ENCODE measurements at regions of chr11 and their contacts with region 1.

Region 1: GRCh38 chr11:18115360-18116127 is 9.7 kb upstream of the SAAL1 start:
- DNase-seq: peak; percentile 78
- H3K4me3 Mint-ChIP-seq: no peak overlapping the region
- H3K27ac Mint-ChIP-seq: no peak overlapping the region
- H3K4me1 Mint-ChIP-seq: no peaks in the 10 kb centered on the region
- H3K27me3 Mint-ChIP-seq: peaks cover 36% of the 10 kb centered on the region
- CTCF ChIP-seq: peak; percentile 86

Region 2: GRCh38 chr11:18132341-18132740 is 16.8 kb after region 1 on chr11 and contains the start of gene MRGPRX3:
- CTCF ChIA-PET with region 1: interaction called, 15 read pairs
- POLR2A ChIA-PET with region 1: interaction called, 3 read pairs
- intact Hi-C with region 1: no loop called
- DNase-seq: peak; percentile 33
- H3K4me3 Mint-ChIP-seq: no peak within 1 kb of the TSS
- H3K27ac Mint-ChIP-seq: no peak within 1 kb of the TSS
- H3K4me1 Mint-ChIP-seq: no peaks in the 10 kb centered on the region
- H3K27me3 Mint-ChIP-seq: no peaks in the 10 kb centered on the region
- CTCF ChIP-seq: no peak
- total RNA-seq, gene MRGPRX3: 0.34 and 0.79 TPM in 2 replicates

Region 3: GRCh38 chr11:18145025-18145424 is 29.5 kb after region 1 on chr11:
- CTCF ChIA-PET with region 1: no interaction called
- POLR2A ChIA-PET with region 1: no interaction called
- intact Hi-C with region 1: no loop called
- DNase-seq: no peak
- H3K4me3 Mint-ChIP-seq: no peak overlapping the region
- H3K27ac Mint-ChIP-seq: no peak overlapping the region
- H3K4me1 Mint-ChIP-seq: peaks cover 11% of the 10 kb centered on the region
- H3K27me3 Mint-ChIP-seq: no peaks in the 10 kb centered on the region
- CTCF ChIP-seq: no peak

Region 4: GRCh38 chr11:18243783-18244362 is 128.3 kb after region 1 on chr11:
- CTCF ChIA-PET with region 1: interaction called, 12 read pairs
- POLR2A ChIA-PET with region 1: no interaction called
- intact Hi-C with region 1: no loop called
- DNase-seq: peak; percentile 86
- H3K4me3 Mint-ChIP-seq: no peak overlapping the region
- H3K27ac Mint-ChIP-seq: no peak overlapping the region
- H3K4me1 Mint-ChIP-seq: peaks cover 24% of the 10 kb centered on the region
- H3K27me3 Mint-ChIP-seq: peaks cover 10% of the 10 kb centered on the region
- CTCF ChIP-seq: peak; percentile 94

Region 5: DNA sequence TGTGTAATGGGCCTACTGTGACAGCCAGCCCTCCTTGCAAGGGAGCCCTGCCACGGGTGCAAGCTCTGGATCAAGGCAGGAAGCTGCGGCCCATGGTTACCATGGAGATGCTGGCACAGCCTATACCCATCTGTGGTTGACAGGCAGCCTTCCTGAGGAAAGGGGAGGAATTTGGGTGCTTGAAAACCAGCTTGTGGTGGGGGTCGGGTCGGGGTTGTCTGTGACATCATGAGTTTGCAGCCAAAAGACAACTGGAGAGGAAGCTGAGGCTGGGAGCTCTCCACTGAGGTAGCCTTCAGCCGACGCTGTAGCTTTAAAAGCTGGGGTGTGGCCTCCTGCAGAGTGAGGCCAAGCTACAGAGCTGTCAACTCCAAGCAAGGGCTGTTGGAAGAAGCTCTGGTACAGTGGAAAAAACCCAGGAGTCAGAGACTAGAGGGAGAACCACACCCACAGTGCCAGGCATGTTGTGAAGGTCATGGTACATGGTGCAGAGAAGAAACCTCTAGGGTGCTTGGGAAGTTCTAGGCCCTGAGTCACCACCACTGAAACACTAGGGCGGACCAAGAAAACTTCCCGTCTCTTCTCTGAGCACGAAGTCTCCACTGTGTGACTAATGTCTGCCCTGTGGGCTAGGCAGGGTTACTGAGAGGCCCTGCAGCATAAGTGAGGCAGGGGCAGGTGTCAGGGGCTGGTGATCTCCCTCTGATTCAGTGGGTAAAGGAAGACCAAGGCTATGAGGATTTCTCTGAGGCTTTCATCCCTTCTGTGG is 268.0 kb after region 1 on chr11:
- CTCF ChIA-PET with region 1: no interaction called
- POLR2A ChIA-PET with region 1: interaction called, 3 read pairs
- intact Hi-C with region 1: loop called (anchors 5 kb)
- DNase-seq: peak; percentile 100
- H3K4me3 Mint-ChIP-seq: peak overlapping the region; percentile 40
- H3K27ac Mint-ChIP-seq: peak overlapping the region; percentile 96
- H3K4me1 Mint-ChIP-seq: peaks cover 21% of the 10 kb centered on the region
- H3K27me3 Mint-ChIP-seq: no peaks in the 10 kb centered on the region
- CTCF ChIP-seq: no peak

Region 6: GRCh38 chr11:18567081-18567480 is 451.5 kb after region 1 on chr11:
- CTCF ChIA-PET with region 1: no interaction called
- POLR2A ChIA-PET with region 1: no interaction called
- intact Hi-C with region 1: no loop called
- DNase-seq: no peak
- H3K4me3 Mint-ChIP-seq: no peak overlapping the region
- H3K27ac Mint-ChIP-seq: peak overlapping the region; percentile 19
- H3K4me1 Mint-ChIP-seq: peaks cover 6% of the 10 kb centered on the region
- H3K27me3 Mint-ChIP-seq: no peaks in the 10 kb centered on the region
- CTCF ChIP-seq: no peak

Region 7: GRCh38 chr11:18731949-18732821 is 616.6 kb after region 1 on chr11:
- CTCF ChIA-PET with region 1: interaction called, 8 read pairs
- POLR2A ChIA-PET with region 1: no interaction called
- intact Hi-C with region 1: loop called (anchors 1 kb)
- DNase-seq: peak; percentile 46
- H3K4me3 Mint-ChIP-seq: no peak overlapping the region
- H3K27ac Mint-ChIP-seq: no peak overlapping the region
- H3K4me1 Mint-ChIP-seq: no peaks in the 10 kb centered on the region
- H3K27me3 Mint-ChIP-seq: no peaks in the 10 kb centered on the region
- CTCF ChIP-seq: peak; percentile 94

Region 8: DNA sequence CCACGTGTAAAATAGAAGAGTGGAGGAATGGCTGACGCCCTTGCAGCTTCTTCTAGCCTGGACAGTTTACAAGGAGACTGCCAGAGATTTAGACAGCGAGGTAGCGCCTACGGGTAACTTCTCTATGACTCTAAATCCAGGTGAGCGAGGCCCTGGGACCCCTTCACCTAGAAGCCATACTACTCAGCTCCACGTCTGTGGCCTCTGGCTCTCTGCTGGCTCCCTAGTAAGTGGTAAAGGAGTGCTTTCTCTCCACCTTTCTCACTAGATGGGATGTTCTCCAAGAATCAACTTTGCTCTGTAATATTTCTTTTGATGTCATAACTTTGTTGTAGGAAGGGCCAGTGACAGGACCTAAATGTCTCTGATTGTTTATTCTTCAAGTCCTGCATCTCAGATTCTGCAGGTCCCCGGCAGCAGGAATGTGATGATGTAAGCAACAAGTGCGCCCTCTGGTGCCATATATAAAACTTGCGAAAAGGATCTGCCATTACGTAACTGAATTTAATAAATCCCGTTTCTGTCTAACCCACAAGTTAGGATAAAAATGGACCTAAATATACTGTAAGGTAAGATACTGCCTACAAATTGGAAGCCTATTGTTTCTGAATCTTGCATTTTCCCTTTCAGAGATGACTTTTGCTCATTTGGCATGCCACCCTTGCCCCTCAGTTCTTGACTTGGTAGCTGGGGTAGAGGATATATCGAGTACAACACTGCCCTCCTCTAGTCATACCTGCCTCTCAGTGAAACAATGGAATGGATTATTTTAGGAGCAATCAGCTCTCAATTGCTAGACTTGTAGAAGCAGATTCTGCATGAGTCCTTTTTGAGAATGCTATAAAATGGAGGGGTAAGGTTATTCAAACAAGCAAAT is 687.1 kb after region 1 on chr11:
- CTCF ChIA-PET with region 1: interaction called, 11 read pairs
- POLR2A ChIA-PET with region 1: no interaction called
- intact Hi-C with region 1: loop called (anchors 1 kb)
- DNase-seq: peak; percentile 66
- H3K4me3 Mint-ChIP-seq: no peak overlapping the region
- H3K27ac Mint-ChIP-seq: no peak overlapping the region
- H3K4me1 Mint-ChIP-seq: no peaks in the 10 kb centered on the region
- H3K27me3 Mint-ChIP-seq: peaks cover 84% of the 10 kb centered on the region
- CTCF ChIP-seq: peak; percentile 50

Measured in MCF 10A (cell line).